Endothelial cell of umbilical vein (primary cell): ENCODE measurements at regions of chr22 and their contacts with region 1.

Region 1: GRCh38 chr22:25465949-25466348 is 98.5 kb upstream of the GRK3 start:
- DNase-seq: no peak
- H3K4me3 ChIP-seq: no peak overlapping the region
- H3K27ac ChIP-seq: no peak overlapping the region
- H3K4me1 ChIP-seq: no peaks in the 10 kb centered on the region
- H3K27me3 ChIP-seq: no peaks in the 10 kb centered on the region
- CTCF ChIP-seq: no peak
- POLR2A ChIP-seq: no peak

Region 2: GRCh38 chr22:25564320-25564978 is 98.5 kb after region 1 on chr22 and contains the start of gene GRK3:
- CTCF ChIA-PET with region 1: interaction called, 4 read pairs
- POLR2A ChIA-PET with region 1: no interaction called
- dilution Hi-C with region 1: no loop called
- intact Hi-C with region 1: loop called (anchors 5 kb)
- DNase-seq: peak; percentile 37
- H3K4me3 ChIP-seq: peak within 1 kb of the TSS; percentile 30 to 67 (median 43)
- H3K27ac ChIP-seq: no peak within 1 kb of the TSS
- H3K4me1 ChIP-seq: peaks cover 6% of the 10 kb centered on the region
- H3K27me3 ChIP-seq: peaks cover 8 to 17% of the 10 kb centered on the region in 2 experiments
- CTCF ChIP-seq: no peak
- POLR2A ChIP-seq: no peak
- total RNA-seq, gene GRK3: 3.0 and 4.4 TPM in 2 replicates

Region 3: DNA sequence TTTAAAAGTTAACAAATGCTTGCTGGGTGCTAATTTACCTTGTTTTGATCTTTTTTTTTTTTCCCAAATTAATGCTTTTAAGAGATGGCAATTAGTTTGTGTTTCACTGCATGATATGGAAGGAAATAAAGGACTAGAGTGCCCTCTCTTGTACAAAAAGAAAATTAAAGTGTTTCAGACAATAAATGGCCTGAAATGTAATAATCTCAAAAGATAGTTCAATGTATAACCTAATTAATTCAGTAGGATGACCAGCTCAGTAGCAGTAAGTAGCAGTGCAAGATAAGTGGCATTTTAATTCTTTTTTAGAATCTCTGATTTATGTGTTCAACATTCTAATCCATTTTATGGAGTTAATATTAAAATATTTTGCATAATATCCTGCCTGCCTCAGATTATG is 236.1 kb after region 1 on chr22:
- CTCF ChIA-PET with region 1: interaction called, 34 read pairs
- POLR2A ChIA-PET with region 1: no interaction called
- dilution Hi-C with region 1: no loop called
- intact Hi-C with region 1: loop called (anchors 1 kb)
- DNase-seq: peak; percentile 29
- H3K4me3 ChIP-seq: no peak overlapping the region
- H3K27ac ChIP-seq: no peak overlapping the region
- H3K4me1 ChIP-seq: no peaks in the 10 kb centered on the region
- H3K27me3 ChIP-seq: no peaks in the 10 kb centered on the region
- CTCF ChIP-seq: no peak
- POLR2A ChIP-seq: no peak

Region 4: GRCh38 chr22:25736378-25737011 is 270.5 kb after region 1 on chr22:
- CTCF ChIA-PET with region 1: no interaction called
- POLR2A ChIA-PET with region 1: no interaction called
- dilution Hi-C with region 1: no loop called
- intact Hi-C with region 1: no loop called
- DNase-seq: no peak
- H3K4me3 ChIP-seq: no peak overlapping the region
- H3K27ac ChIP-seq: no peak overlapping the region
- H3K4me1 ChIP-seq: no peaks in the 10 kb centered on the region
- H3K27me3 ChIP-seq: no peaks in the 10 kb centered on the region
- CTCF ChIP-seq: no peak
- POLR2A ChIP-seq: no peak

Region 5: DNA sequence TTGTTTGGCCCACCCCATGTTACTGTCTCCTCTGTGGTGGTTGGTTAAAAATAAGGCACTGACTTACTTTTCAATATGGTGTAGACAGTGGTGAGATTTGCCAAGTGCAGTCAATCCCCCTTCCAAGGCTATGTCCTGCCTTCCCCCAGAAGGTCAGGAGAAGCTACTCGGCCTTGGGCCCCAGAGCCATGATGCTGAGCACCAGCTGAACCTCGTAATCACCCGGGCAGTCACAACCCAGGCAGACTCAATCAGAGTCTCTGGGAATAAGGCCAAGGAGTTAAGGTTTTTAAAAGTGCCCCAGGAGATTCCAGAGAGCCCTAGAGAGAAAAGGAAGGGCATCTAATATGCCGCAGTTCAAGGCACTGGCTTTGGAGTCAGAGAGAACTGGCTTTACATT is 299.9 kb after region 1 on chr22:
- CTCF ChIA-PET with region 1: interaction called, 159 read pairs
- POLR2A ChIA-PET with region 1: no interaction called
- dilution Hi-C with region 1: no loop called
- intact Hi-C with region 1: no loop called
- DNase-seq: no peak
- H3K4me3 ChIP-seq: no peak overlapping the region
- H3K27ac ChIP-seq: no peak overlapping the region
- H3K4me1 ChIP-seq: peaks cover 15% of the 10 kb centered on the region
- H3K27me3 ChIP-seq: no peaks in the 10 kb centered on the region
- CTCF ChIP-seq: no peak
- POLR2A ChIP-seq: no peak

Region 6: DNA sequence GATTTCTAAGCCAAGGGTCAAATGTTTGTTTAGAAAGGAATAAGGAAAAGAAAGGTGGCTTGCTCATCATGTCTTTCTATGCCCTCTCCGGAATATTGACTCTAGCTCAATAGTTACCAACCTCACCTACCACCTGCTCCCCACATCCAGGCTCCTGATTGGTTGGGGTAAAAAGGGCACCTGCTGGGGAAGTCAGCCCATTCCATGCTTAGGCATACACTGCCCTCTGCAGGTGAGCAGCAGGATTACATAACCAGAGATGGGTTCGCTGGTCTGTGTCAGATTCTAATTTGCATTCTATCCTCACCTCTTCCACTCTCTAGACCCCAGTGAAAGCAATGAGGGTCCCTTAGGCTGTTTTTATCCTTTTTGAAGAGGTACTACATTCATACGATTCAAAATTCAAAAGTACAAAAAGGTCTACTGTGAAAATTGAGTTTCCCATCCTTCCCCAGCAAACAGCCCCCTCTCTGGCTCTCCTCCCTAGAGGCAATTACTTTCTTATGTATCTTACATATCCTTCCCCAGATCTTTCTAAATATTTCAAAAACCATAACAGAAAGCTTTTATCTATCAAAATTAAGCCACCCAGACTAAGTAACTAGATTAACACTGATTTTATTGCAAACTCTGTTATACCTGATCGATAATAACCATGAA is 865.1 kb after region 1 on chr22:
- CTCF ChIA-PET with region 1: interaction called, 10 read pairs
- POLR2A ChIA-PET with region 1: no interaction called
- dilution Hi-C with region 1: no loop called
- intact Hi-C with region 1: loop called (anchors 2 kb)
- DNase-seq: peak; percentile 37
- H3K4me3 ChIP-seq: no peak overlapping the region
- H3K27ac ChIP-seq: no peak overlapping the region
- H3K4me1 ChIP-seq: no peaks in the 10 kb centered on the region
- H3K27me3 ChIP-seq: peaks cover 0 to 2% of the 10 kb centered on the region in 2 experiments
- CTCF ChIP-seq: peak; percentile 82 to 84
- POLR2A ChIP-seq: no peak